Left colon (tissue), 2 donors: ENCODE measurements at regions of chr7 and their contacts with region 1.

Region 1: GRCh38 chr7:103547451-103548284 is 101.7 kb upstream of the SLC26A5 start:
- DNase-seq: no peak
- ATAC-seq: no peak

Region 2: DNA sequence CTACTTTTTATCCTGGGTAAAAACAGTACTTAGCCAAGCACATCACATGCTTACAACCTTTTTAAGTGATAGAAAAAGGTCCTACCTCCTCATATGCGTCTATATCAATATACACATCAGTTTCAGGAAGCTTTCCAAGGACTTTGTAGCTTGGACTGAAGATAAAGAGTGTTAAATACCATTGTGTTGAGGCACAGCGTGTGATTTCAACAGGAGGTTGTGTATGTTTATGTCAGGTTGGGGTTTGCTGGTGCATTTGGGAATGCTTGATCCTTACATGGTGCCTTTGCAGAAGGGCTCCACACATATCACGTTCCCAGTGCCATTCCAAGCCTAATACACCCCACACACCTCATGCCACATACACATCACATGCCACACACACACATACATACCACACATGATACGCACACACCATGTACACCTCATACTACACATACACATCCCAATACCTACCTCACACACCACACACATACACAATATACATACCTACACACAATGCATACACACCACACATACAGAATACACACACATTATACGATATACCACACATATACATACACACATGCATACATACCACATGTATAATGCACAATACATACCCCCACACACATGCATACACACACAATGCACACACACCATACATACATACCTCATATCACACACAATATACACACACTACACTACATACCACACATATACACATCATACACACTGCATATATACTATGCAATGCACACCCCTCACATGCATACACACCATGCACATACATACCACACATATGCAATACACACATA is 167.1 kb before region 1 on chr7:
- intact Hi-C with region 1: no loop called
- DNase-seq: no peak
- ATAC-seq: no peak

Region 3: DNA sequence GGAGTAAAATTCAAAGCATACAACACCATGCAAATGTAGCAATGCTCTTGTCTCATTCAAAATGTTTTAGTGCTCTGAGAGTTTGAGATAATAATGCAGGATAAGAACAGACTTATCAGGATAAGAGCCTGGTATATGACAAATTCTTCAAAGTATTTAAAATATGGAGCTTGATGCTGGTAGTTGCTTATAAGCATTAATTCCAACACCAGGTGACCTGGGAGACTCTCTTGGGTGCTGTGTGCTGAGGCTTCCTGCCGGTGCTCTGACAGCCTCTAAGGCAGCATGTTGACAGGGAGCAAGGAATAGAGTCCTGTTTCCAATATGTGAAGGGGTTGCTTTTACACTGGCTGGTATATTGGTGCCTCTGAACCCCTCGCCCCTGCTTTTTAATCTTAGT is 66.9 kb before region 1 on chr7:
- intact Hi-C with region 1: loop called in 1 of 2 experiments (anchors 2 kb)
- DNase-seq: no peak
- ATAC-seq: no peak

Region 4: GRCh38 chr7:103613655-103614642 is 66.3 kb after region 1 on chr7:
- intact Hi-C with region 1: no loop called
- DNase-seq: no peak
- ATAC-seq: no peak